Sigmoid colon (tissue), 7 donors: ENCODE measurements at regions of chr11 and their contacts with region 1.

Region 1: GRCh38 chr11:69010964-69011623 is 2.0 kb downstream of the MRGPRF start:
- DNase-seq: peak; percentile 97
- H3K4me3 ChIP-seq: peak overlapping the region; percentile 75 to 84 (median 78)
- H3K27ac ChIP-seq: peak overlapping the region; percentile 91 to 100 (median 98)
- H3K4me1 ChIP-seq: peaks cover 0 to 73% (median 69%) of the 10 kb centered on the region in 4 donors
- H3K27me3 ChIP-seq: no peaks in the 10 kb centered on the region
- CTCF ChIP-seq: no peak
- EP300 ChIP-seq: no peak
- POLR2A ChIP-seq: peak; percentile 68 to 92

Region 2: DNA sequence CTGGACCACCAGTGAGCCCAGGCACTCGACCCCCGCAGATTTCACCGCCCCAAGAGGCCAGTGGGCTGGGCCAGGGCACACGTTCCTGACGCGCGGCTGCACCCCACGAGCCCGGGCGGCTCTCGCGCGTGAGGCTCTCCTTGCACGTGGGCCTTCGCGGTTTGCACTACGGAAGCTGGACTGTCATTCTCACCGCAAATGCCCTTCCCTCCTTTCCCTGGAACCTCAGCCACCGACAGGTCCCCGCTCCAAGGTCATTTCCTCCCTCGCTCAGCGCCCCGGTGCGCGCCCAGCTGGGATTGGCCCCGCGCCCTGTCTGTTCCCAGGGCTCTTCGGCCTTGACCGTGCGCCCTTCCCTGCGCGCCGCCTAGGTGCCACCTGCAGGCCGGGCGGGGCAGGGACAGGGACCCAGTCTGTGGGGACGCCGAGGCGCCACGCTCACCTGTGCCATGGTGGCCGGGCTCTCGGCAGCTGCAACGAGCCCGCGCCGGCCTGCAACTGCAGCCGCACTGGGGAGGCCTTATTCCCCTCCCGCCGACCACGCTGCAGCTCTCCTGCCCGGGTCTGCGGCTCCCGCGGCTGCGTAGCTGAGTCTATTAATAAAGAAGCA is 167.3 kb before region 1 on chr11:
- intact Hi-C with region 1: loop called (anchors 5 kb)
- DNase-seq: peak; percentile 84
- H3K4me3 ChIP-seq: peak overlapping the region; percentile 13 to 92 (median 81)
- H3K27ac ChIP-seq: peak overlapping the region; percentile 32 to 98 (median 95)
- H3K4me1 ChIP-seq: peaks cover 0 to 41% (median 37%) of the 10 kb centered on the region in 4 donors
- H3K27me3 ChIP-seq: no peaks in the 10 kb centered on the region
- CTCF ChIP-seq: peak; percentile 43 to 57 (median 46)
- EP300 ChIP-seq: no peak
- POLR2A ChIP-seq: no peak

Region 3: DNA sequence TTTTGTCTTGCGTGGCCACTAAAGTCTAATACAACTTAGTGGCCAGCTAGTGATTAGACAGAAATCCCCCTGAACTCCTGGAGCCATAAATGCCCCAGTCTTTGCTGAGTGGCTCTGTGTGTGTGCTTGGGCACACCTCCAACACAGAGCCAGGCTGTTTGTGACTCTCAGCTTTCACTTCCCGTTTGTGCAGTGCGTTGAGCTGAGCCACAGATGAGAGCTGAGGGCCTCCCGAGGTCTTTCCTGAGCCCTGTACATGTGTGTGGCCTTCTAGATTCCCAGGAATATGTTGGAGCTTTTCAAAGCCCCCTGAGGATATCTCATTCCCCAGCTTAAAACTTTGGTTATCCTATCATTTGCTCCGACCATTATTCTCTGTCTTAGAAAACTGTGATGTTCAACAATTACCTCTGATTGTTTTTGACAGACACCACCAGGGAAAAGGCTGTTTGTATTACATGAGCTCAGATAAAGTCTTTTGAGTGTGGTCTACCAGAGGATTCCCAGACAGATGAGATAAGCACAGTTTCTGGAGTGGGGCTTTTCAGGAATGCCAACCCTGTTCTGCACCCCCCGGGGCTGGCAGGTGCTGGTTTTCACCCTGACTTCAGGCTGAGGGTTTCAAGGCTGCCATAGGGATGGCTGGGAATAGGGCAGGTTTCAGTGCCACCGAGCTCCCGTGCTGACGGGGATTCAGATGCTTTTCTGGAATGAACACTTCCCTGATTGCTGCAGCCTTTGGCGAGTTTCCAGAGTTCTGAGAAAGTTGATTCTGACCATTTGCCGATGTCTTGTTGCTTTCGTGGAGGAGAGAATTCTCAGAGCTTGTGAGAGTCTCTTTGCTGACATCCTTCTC is 83.6 kb before region 1 on chr11:
- intact Hi-C with region 1: loop called (anchors 2 kb)
- DNase-seq: no peak
- H3K4me3 ChIP-seq: no peak overlapping the region
- H3K27ac ChIP-seq: peak overlapping the region; percentile 81 to 94 (median 85)
- H3K4me1 ChIP-seq: peaks cover 0 to 59% (median 46%) of the 10 kb centered on the region in 4 donors
- H3K27me3 ChIP-seq: no peaks in the 10 kb centered on the region
- CTCF ChIP-seq: no peak
- EP300 ChIP-seq: no peak
- POLR2A ChIP-seq: no peak

Region 4: DNA sequence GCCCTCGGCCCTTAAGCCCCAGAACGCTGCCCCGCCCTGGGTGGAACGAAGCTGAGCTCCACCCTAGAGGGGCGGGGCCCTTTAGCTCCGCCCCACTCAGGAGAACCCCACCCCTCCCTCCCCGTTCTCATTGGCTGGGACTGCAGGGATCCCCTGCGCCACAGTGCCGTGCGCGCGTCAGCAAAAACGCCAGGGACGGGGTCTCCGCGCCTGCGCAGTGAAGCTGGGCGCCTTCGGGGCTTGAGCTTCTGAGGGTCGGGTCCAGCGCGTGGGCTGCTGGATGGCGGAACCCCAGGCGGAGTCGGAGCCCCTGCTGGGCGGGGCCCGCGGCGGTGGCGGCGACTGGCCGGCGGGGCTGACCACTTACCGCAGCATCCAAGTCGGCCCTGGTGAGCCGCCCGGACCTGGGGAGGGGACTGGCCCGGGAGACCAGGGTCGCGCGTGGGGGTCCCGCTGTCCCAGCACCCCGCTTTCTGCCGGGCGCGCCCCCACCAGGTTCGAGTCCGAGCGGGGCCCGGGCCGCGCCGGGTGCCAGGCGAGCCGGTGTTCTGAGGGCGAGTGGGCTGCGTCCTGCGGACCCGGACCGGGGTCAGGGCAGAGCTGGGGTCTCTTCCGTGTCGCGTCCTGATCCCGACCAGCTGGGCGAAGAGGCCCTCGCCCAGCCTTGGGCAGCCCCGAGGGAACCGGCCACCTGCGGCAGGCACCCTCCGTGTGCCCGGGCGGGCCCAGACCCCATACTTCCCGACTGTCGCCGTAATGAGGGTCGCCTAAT is 37.8 kb after region 1 on chr11 and contains the start of gene TPCN2:
- intact Hi-C with region 1: loop called (anchors 1 kb)
- DNase-seq: peak; percentile 98
- H3K4me3 ChIP-seq: peak within 1 kb of the TSS; percentile 70 to 99 (median 92)
- H3K27ac ChIP-seq: peak within 1 kb of the TSS; percentile 94 to 99 (median 98)
- H3K4me1 ChIP-seq: peaks cover 0 to 64% (median 59%) of the 10 kb centered on the region in 4 donors
- H3K27me3 ChIP-seq: no peaks in the 10 kb centered on the region
- CTCF ChIP-seq: no peak
- EP300 ChIP-seq: peak in 1 of 4 donors; percentile 73
- POLR2A ChIP-seq: peak; percentile 59 to 87
- total RNA-seq, gene TPCN2: 17.5 to 43.5 (median 25.3) TPM